Cardiac septum (tissue), 1 donor: ENCODE measurements at regions of chr2 and their contacts with region 1.

Region 1: DNA sequence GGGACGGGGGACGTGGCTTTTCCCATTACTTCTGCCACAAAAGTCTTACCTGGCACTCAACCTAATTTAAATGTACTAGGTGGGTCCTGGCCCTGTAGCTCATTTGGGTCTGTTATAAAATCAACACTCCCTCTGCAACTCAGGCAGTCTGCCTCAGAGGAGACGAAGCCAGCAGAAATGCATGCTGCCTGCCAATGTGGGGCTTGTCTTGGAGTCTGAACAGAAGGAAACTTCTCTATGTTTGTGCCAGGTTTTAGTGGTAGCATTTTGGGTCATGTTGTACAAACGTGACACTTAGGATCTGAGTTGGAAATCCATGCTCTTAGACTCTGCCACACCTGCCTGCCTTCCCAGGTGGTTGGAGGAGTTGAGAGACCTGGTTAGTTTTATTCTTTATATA is 292.5 kb upstream of the FAM98A start:
- DNase-seq: no peak

Region 2: GRCh38 chr2:33877348-33878016 is 14.1 kb before region 1 on chr2:
- intact Hi-C with region 1: loop called (anchors 2 kb)
- DNase-seq: no peak